PC-3 (cell line): ENCODE measurements at regions of chr5 and their contacts with region 1.

Region 1: GRCh38 chr5:16489322-16489791 is 23.8 kb upstream of the ZNF622 start:
- DNase-seq: peak; percentile 84
- ATAC-seq: peak; percentile 85
- H3K4me3 ChIP-seq: no peak overlapping the region
- H3K27ac ChIP-seq: no peak overlapping the region
- H3K4me1 ChIP-seq: no peaks in the 10 kb centered on the region
- H3K27me3 ChIP-seq: no peaks in the 10 kb centered on the region
- CTCF ChIP-seq: peak; percentile 99

Region 2: GRCh38 chr5:16005225-16005624 is 484.1 kb before region 1 on chr5:
- CTCF ChIA-PET with region 1: no interaction called
- POLR2A ChIA-PET with region 1: no interaction called
- intact Hi-C with region 1: no loop called
- DNase-seq: no peak
- ATAC-seq: no peak
- H3K4me3 ChIP-seq: no peak overlapping the region
- H3K27ac ChIP-seq: no peak overlapping the region
- H3K4me1 ChIP-seq: no peaks in the 10 kb centered on the region
- H3K27me3 ChIP-seq: no peaks in the 10 kb centered on the region
- CTCF ChIP-seq: no peak

Region 3: GRCh38 chr5:16536246-16536645 is 46.9 kb after region 1 on chr5:
- CTCF ChIA-PET with region 1: no interaction called
- POLR2A ChIA-PET with region 1: no interaction called
- intact Hi-C with region 1: no loop called
- DNase-seq: peak; percentile 98
- ATAC-seq: peak; percentile 83
- H3K4me3 ChIP-seq: peak overlapping the region; percentile 18; the same call in 1 of the 2 replicates
- H3K27ac ChIP-seq: peak overlapping the region; percentile 76
- H3K4me1 ChIP-seq: peaks cover 35% of the 10 kb centered on the region
- H3K27me3 ChIP-seq: no peaks in the 10 kb centered on the region
- CTCF ChIP-seq: no peak

Region 4: DNA sequence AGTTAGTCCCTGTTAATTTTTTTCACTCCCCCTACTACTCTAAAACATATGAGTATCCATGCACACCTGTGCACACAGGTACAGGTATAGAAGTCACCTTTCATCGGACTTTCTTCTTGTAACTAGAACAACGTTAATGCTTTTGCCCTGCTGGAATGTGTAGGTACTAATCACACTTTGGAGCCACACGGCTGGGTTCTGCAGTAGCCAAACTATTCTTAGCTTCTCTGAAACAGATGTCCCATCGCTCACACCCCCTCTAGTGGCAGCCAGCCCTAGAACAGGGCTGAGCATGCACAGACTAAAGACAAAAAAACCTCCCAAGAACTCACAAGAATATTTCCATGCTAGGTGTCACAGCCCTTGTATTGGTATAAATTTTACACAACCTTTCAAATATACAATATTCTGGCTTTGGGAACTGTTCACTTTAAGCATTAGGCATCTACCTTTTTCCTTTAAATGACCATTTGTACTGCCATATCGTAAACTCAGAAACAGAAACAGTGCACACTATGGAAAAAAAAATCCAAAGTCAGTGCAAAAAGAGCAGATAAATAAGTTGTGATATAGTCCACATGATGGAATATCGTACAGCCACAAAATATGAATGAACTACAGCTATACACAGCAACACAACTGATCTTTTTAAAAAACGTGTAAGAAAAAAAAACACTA is 63.4 kb after region 1 on chr5:
- CTCF ChIA-PET with region 1: interaction called, 5 read pairs
- POLR2A ChIA-PET with region 1: no interaction called
- intact Hi-C with region 1: loop called (anchors 1 kb)
- DNase-seq: peak; percentile 95
- ATAC-seq: peak; percentile 99
- H3K4me3 ChIP-seq: no peak overlapping the region
- H3K27ac ChIP-seq: no peak overlapping the region
- H3K4me1 ChIP-seq: 0 out of 2 replicates have a peak, but pooled peaks cover 3% of the 10 kb centered on the region
- H3K27me3 ChIP-seq: no peaks in the 10 kb centered on the region
- CTCF ChIP-seq: peak; percentile 100

Region 5: GRCh38 chr5:16666883-16667398 is 177.6 kb after region 1 on chr5:
- CTCF ChIA-PET with region 1: no interaction called
- POLR2A ChIA-PET with region 1: no interaction called
- intact Hi-C with region 1: loop called (anchors 1 kb)
- DNase-seq: peak; percentile 50
- ATAC-seq: no peak
- H3K4me3 ChIP-seq: no peak overlapping the region
- H3K27ac ChIP-seq: no peak overlapping the region
- H3K4me1 ChIP-seq: no peaks in the 10 kb centered on the region
- H3K27me3 ChIP-seq: no peaks in the 10 kb centered on the region
- CTCF ChIP-seq: peak; percentile 84

Region 6: DNA sequence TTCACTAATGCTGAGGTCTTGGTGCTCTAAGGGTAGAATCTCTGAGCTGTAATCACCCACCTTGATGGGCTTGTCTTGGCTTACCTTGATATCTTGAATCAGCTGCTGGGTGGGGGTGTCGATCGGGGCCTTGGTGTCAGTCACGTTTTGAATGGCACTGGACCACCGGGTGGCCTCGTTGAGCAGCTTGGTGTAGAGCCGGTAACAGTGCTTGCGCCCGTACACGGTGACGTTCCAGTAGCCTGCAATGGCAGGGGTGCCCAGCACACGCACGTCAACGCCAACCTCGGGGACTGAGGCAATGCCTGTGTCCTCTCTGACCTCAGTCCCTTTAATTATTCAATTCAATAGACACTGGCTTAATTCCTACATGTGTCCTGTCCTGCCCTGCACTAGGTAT is 190.5 kb after region 1 on chr5:
- CTCF ChIA-PET with region 1: no interaction called
- POLR2A ChIA-PET with region 1: no interaction called
- intact Hi-C with region 1: no loop called
- DNase-seq: peak; percentile 24
- ATAC-seq: no peak
- H3K4me3 ChIP-seq: no peak overlapping the region
- H3K27ac ChIP-seq: no peak overlapping the region
- H3K4me1 ChIP-seq: no peaks in the 10 kb centered on the region
- H3K27me3 ChIP-seq: no peaks in the 10 kb centered on the region
- CTCF ChIP-seq: peak; percentile 59